Activated CD8-positive, alpha-beta T cell treated with anti-CD3 and anti-CD28 coated beads for 36 hours (primary cell): ENCODE measurements at regions of chr2 and their contacts with region 1.

Region 1: GRCh38 chr2:201363857-201364560 is 6.9 kb upstream of the FLACC1 start:
- DNase-seq: peak; percentile 33
- ATAC-seq: peak; percentile 96
- H3K4me3 Mint-ChIP-seq: no peak overlapping the region
- H3K27ac Mint-ChIP-seq: no peak overlapping the region
- H3K4me1 Mint-ChIP-seq: peaks cover 23% of the 10 kb centered on the region
- H3K27me3 Mint-ChIP-seq: no peaks in the 10 kb centered on the region
- CTCF ChIP-seq: peak; percentile 95

Region 2: DNA sequence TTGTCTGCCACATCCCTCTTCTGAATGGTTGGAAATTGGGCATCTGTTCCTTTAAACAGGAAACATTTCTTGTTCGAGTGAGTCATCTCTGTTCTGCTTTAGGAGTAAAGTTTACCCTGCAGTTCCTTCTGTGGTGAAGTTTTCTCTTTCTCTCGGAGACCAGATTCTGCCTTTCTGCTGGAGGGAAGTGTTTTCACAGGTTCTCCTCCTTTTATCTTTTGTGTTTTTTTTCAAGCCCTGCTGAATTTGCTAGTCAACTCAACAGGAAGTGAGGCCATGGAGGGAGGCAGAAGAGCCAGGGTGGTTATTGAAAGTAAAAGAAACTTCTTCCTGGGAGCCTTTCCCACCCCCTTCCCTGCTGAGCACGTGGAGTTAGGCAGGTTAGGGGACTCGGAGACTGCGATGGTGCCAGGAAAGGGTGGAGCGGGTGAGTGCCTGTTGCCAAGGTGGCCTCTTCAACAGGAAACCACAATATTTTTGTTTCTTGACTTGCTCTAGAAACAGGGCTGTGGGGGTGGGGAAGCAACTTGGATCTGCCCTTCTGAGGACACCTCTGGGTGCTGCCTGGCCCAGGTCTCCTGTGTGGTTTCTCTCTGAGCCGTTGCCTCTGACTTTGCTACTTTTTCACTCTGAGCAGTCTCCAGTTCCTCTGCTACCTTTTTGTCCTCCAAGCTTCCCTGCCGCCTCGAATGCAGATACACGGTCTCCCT is 105.9 kb before region 1 on chr2:
- CTCF ChIA-PET with region 1: interaction called, 6 read pairs
- POLR2A ChIA-PET with region 1: interaction called, 4 read pairs
- intact Hi-C with region 1: loop called (anchors 5 kb)
- DNase-seq: peak; percentile 98
- ATAC-seq: peak; percentile 60
- H3K4me3 Mint-ChIP-seq: peak overlapping the region; percentile 81
- H3K27ac Mint-ChIP-seq: peak overlapping the region; percentile 98
- H3K4me1 Mint-ChIP-seq: peaks cover 74% of the 10 kb centered on the region
- H3K27me3 Mint-ChIP-seq: no peaks in the 10 kb centered on the region
- CTCF ChIP-seq: no peak

Region 3: DNA sequence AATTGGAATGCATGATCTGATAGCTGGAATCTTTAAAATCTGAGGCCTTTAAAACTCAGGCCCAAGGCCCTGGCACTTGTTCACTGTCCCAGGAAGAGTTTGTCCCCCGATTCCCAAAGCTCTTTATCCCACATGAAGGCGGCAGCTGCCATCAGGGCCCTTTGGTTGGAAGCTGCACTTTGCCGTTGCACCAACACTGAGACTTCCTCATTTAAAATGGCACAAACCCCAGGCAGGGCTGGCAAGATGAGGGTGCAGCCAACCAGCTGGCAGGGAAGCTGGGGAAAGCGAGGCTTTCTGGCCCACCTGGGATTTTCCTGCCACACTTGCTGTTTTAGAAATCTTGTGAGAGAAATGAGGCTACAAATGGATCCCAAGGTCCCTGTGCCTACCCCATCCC is 13.1 kb before region 1 on chr2:
- CTCF ChIA-PET with region 1: interaction called, 15 read pairs
- POLR2A ChIA-PET with region 1: no interaction called
- intact Hi-C with region 1: no loop called
- DNase-seq: no peak
- ATAC-seq: no peak
- H3K4me3 Mint-ChIP-seq: no peak overlapping the region
- H3K27ac Mint-ChIP-seq: no peak overlapping the region
- H3K4me1 Mint-ChIP-seq: no peaks in the 10 kb centered on the region
- H3K27me3 Mint-ChIP-seq: no peaks in the 10 kb centered on the region
- CTCF ChIP-seq: no peak

Region 4: GRCh38 chr2:201378496-201379397 is 14.7 kb after region 1 on chr2:
- CTCF ChIA-PET with region 1: interaction called, 12 read pairs
- POLR2A ChIA-PET with region 1: no interaction called
- intact Hi-C with region 1: no loop called
- DNase-seq: no peak
- ATAC-seq: no peak
- H3K4me3 Mint-ChIP-seq: no peak overlapping the region
- H3K27ac Mint-ChIP-seq: no peak overlapping the region
- H3K4me1 Mint-ChIP-seq: no peaks in the 10 kb centered on the region
- H3K27me3 Mint-ChIP-seq: no peaks in the 10 kb centered on the region
- CTCF ChIP-seq: no peak

Region 5: GRCh38 chr2:201668402-201668910 is 304.4 kb after region 1 on chr2:
- CTCF ChIA-PET with region 1: no interaction called
- POLR2A ChIA-PET with region 1: no interaction called
- intact Hi-C with region 1: no loop called
- DNase-seq: no peak
- ATAC-seq: no peak
- H3K4me3 Mint-ChIP-seq: no peak overlapping the region
- H3K27ac Mint-ChIP-seq: no peak overlapping the region
- H3K4me1 Mint-ChIP-seq: no peaks in the 10 kb centered on the region
- H3K27me3 Mint-ChIP-seq: peaks cover 2% of the 10 kb centered on the region
- CTCF ChIP-seq: no peak